ENCODE measurements at regions of chr19 and their contacts with region 1.

Region 1: GRCh38 chr19:56393119-56394012 is at the start of gene ZNF582:
- DNase-seq: peak; percentile 96
- ATAC-seq: peak; percentile 99
- H3K4me3 Mint-ChIP-seq: peak within 1 kb of the TSS; percentile 93
- H3K27ac Mint-ChIP-seq: peak within 1 kb of the TSS; percentile 93
- H3K4me1 Mint-ChIP-seq: peaks cover 12% of the 10 kb centered on the region
- H3K27me3 Mint-ChIP-seq: no peaks in the 10 kb centered on the region
- total RNA-seq, gene ZNF582: 2.8 to 3.3 TPM

Region 2: DNA sequence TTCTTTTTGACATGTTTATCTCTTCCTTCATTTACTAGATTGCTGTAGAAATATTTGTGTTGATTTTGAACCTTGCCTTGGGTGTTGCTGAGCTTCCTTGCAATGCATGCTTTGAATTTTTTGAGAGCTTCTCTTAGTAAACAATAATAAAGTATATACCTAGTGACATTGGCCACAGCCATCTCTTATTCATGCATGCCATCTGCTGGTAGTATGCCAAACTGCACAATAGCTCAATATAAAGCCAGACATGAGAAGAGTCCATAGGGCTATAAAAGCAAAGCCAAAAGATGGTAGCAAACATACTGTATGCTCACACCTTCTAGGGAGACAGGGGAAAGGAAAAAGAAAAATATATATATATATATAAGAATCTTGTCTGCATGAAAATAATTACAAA is 59.9 kb before region 1 on chr19:
- CTCF ChIA-PET with region 1: no interaction called
- POLR2A ChIA-PET with region 1: no interaction called
- DNase-seq: peak; percentile 63
- ATAC-seq: peak; percentile 49
- H3K4me3 Mint-ChIP-seq: no peak overlapping the region
- H3K27ac Mint-ChIP-seq: no peak overlapping the region
- H3K4me1 Mint-ChIP-seq: no peaks in the 10 kb centered on the region
- H3K27me3 Mint-ChIP-seq: peaks cover 7% of the 10 kb centered on the region

Region 3: DNA sequence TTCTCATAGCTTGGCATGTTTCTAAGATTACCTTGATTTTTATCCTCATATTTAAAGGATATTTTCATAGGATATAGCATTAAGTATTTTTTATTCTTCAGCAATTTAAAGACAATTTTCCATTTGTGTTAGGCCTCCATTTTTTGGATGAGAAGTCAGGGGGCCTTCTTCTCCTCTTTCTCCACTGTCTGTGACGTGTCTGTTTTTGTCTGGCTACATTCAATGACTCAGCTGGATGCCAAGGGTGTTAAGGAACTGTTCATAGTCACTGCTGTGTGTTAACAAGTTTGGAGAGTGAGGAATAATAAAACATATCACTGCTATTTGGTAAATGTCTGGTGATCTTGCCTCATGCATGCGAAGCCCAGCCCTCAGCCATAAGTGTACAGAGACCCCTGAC is 36.4 kb before region 1 on chr19:
- CTCF ChIA-PET with region 1: no interaction called
- POLR2A ChIA-PET with region 1: no interaction called
- DNase-seq: no peak
- ATAC-seq: no peak
- H3K4me3 Mint-ChIP-seq: no peak overlapping the region
- H3K27ac Mint-ChIP-seq: no peak overlapping the region
- H3K4me1 Mint-ChIP-seq: no peaks in the 10 kb centered on the region
- H3K27me3 Mint-ChIP-seq: no peaks in the 10 kb centered on the region

Region 4: GRCh38 chr19:56403764-56404704 is 10.7 kb after region 1 on chr19 and contains the start of gene ZNF583:
- CTCF ChIA-PET with region 1: interaction called, 7 read pairs
- POLR2A ChIA-PET with region 1: interaction called, 10 read pairs
- DNase-seq: peak; percentile 91
- ATAC-seq: peak; percentile 91
- H3K4me3 Mint-ChIP-seq: peak within 1 kb of the TSS; percentile 79
- H3K27ac Mint-ChIP-seq: peak within 1 kb of the TSS; percentile 87
- H3K4me1 Mint-ChIP-seq: peaks cover 21% of the 10 kb centered on the region
- H3K27me3 Mint-ChIP-seq: no peaks in the 10 kb centered on the region
- total RNA-seq, gene ZNF583: 4.3 to 4.6 TPM

Measured in activated CD8-positive, alpha-beta T cell treated with anti-CD3 and anti-CD28 coated beads, Interleukin-2, amount 10 ng/mL, durations not matched to agents 7 days and 5 days (primary cell).